Activated CD4-positive, alpha-beta T cell treated with anti-CD3 and anti-CD28 coated beads, Interleukin-2, amount 10 ng/mL, durations not matched to agents 24 days and 14 days (primary cell): ENCODE measurements at regions of chr11 and their contacts with region 1.

Region 1: GRCh38 chr11:798093-798713 is at the start of gene SLC25A22:
- DNase-seq: peak; percentile 97
- H3K4me3 Mint-ChIP-seq: peak within 1 kb of the TSS; percentile 91
- H3K27ac Mint-ChIP-seq: peak within 1 kb of the TSS; percentile 87
- H3K4me1 Mint-ChIP-seq: peaks cover 7% of the 10 kb centered on the region
- H3K27me3 Mint-ChIP-seq: no peaks in the 10 kb centered on the region
- total RNA-seq, gene SLC25A22: 84.9 and 90.3 TPM in 2 replicates

Region 2: GRCh38 chr11:695538-696248 is 102.5 kb before region 1 on chr11 and contains the start of gene TMEM80:
- intact Hi-C with region 1: loop called (anchors 5 kb)
- DNase-seq: peak; percentile 99
- H3K4me3 Mint-ChIP-seq: peak within 1 kb of the TSS; percentile 90
- H3K27ac Mint-ChIP-seq: peak within 1 kb of the TSS; percentile 94
- H3K4me1 Mint-ChIP-seq: peaks cover 42% of the 10 kb centered on the region
- H3K27me3 Mint-ChIP-seq: no peaks in the 10 kb centered on the region
- total RNA-seq, gene TMEM80: 12.3 and 12.5 TPM in 2 replicates

Region 3: DNA sequence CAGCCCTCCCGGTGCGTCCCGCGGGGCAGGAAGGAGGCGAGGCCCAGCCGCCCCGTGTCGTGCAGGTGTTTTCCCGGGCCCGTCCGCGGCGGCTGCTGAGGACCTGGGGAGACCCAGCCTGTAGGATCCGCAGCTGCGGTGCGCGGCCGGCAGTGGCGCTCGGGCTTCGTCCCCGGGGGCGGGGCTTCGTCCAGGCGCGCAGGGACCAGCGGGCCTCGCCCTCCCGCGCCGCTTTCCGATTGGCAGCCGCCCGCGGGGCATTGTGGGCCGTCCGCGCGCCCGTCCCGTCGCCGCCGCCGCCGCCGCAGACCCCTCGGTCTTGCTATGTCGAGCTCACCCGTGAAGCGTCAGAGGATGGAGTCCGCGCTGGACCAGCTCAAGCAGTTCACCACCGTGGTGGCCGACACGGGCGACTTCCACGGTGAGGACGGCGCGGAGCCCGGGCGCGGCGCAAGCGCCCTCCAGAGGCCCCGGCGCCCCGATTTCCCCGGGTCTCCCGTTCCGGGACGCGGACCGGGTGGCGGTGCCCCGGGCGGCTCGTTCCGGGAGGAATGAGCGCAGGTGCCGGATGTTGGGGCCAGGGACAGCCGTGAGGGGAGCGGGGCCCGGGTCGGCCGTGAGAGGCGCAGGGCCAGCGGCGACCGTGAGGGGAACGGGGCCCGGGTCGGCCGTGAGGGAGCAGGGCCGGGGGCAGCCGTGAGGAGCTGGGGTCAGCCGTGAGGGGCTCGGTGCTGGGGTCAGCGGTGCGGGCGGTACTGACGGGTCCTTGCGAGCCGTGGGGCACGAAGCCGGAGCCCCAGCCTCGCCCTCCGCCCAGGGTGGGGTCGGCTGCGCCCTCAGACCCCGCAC is 50.8 kb before region 1 on chr11 and contains the start of gene TALDO1:
- intact Hi-C with region 1: loop called (anchors 2 kb)
- DNase-seq: peak; percentile 97
- H3K4me3 Mint-ChIP-seq: peak within 1 kb of the TSS; percentile 90
- H3K27ac Mint-ChIP-seq: peak within 1 kb of the TSS; percentile 82
- H3K4me1 Mint-ChIP-seq: peaks cover 14% of the 10 kb centered on the region
- H3K27me3 Mint-ChIP-seq: no peaks in the 10 kb centered on the region
- total RNA-seq, gene TALDO1: 265 and 279 TPM in 2 replicates

Region 4: GRCh38 chr11:777288-778255 is 20.6 kb before region 1 on chr11 and contains the start of gene GATD1:
- intact Hi-C with region 1: loop called (anchors 2 kb)
- DNase-seq: peak; percentile 99
- H3K4me3 Mint-ChIP-seq: peak within 1 kb of the TSS; percentile 92
- H3K27ac Mint-ChIP-seq: peak within 1 kb of the TSS; percentile 85
- H3K4me1 Mint-ChIP-seq: peaks cover 18% of the 10 kb centered on the region
- H3K27me3 Mint-ChIP-seq: no peaks in the 10 kb centered on the region
- total RNA-seq, gene GATD1: 81.7 and 82.2 TPM in 2 replicates